ENCODE measurements at regions of chr1 and their contacts with region 1.

Region 1: DNA sequence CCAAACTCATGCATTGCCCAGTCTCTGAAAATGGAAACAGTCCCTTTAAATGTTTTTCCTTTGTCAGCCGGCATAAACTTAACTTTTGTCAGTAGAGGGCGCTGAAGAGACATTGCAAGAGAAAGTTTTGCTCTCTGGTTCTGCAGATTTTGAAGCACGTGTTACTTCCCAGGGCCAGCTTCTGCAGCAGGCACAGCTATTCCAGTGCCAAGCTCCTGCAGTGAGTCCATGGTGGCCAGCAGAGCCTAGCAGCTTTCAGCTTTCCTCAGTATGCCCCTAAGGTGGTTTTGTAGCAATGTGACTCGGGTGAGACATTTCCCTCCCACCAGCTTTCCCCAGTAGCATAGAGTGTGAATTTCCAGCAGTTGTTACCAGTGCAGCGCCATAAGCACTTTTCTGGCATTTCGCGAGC is 2.6 kb upstream of the IFI44L start:
- DNase-seq: peak; percentile 55 to 72
- H3K4me3 ChIP-seq: no peak overlapping the region
- H3K27ac ChIP-seq: no peak overlapping the region
- H3K4me1 ChIP-seq: peaks cover 0 to 5% of the 10 kb centered on the region in 2 donors
- H3K27me3 ChIP-seq: no peaks in the 10 kb centered on the region
- CTCF ChIP-seq: peak; percentile 82 to 94 (median 90)
- POLR2A ChIP-seq: no peak

Region 2: GRCh38 chr1:78136680-78137079 is 480.9 kb before region 1 on chr1:
- intact Hi-C with region 1: loop called (anchors 5 kb)
- DNase-seq: no peak
- H3K4me3 ChIP-seq: no peak overlapping the region
- H3K27ac ChIP-seq: no peak overlapping the region
- H3K4me1 ChIP-seq: no peaks in the 10 kb centered on the region
- H3K27me3 ChIP-seq: no peaks in the 10 kb centered on the region
- CTCF ChIP-seq: no peak
- POLR2A ChIP-seq: no peak

Region 3: GRCh38 chr1:78676347-78676982 is 58.8 kb after region 1 on chr1:
- intact Hi-C with region 1: loop called (anchors 10 kb)
- DNase-seq: peak; percentile 32 to 70
- H3K4me3 ChIP-seq: no peak overlapping the region
- H3K27ac ChIP-seq: no peak overlapping the region
- H3K4me1 ChIP-seq: no peaks in the 10 kb centered on the region
- H3K27me3 ChIP-seq: no peaks in the 10 kb centered on the region
- CTCF ChIP-seq: peak; percentile 67 to 77 (median 72)
- POLR2A ChIP-seq: no peak

Measured in uterus (tissue), 4 donors.